Endothelial cell of umbilical vein (primary cell): ENCODE measurements at regions of chr20 and their contacts with region 1.

Region 1: GRCh38 chr20:57596998-57597939 is 23.0 kb downstream of the ZBP1 start:
- DNase-seq: peak; percentile 17
- H3K4me3 ChIP-seq: no peak overlapping the region
- H3K27ac ChIP-seq: no peak overlapping the region
- H3K4me1 ChIP-seq: no peaks in the 10 kb centered on the region
- H3K27me3 ChIP-seq: peaks cover 2% of the 10 kb centered on the region in 2 experiments
- CTCF ChIP-seq: peak; percentile 88 to 94
- POLR2A ChIP-seq: no peak

Region 2: DNA sequence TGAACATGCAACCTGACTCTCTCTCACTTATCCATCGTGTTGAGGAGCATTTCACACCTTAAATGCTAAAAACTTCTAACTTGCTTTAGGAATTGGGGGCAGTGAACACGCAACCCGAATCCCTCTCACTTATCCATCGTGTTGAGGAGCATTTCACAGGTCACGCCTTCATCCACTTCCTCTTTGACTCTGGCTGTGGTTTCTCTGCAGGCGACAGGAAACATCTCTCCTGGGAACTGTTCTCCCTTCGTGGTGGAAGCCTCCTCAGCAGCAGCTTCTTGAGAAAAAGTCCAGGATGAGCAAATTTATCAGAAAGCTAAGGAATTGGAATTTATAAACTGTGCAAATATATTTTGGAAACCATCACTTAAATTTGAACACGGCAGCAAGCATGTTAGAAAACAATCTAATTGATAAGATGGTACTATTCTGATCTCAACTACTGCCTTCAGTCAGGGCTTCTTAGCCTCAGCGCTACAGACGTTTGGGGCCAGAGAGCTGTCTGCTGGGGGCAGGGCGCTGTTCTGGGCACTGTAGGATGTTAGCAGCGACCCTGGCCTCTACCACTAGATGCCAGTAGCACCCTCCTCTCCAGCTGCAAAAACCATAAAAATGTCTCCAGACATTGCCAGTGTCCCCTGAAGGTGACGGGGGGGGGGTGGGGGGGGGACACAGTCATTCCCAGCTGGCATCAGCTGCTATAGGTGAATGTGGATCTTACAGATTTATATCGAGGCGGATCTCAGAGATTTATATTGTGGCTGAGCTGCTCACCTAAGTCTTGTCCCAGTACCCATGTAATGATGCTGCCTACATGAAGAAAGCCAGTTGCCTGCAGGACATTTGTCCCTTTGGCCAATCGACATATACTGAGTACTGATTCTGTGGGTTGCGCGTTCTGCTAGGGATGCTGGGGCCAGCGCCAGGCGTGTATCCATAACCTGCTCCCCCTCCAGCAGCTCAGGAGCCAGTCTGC is 98.6 kb before region 1 on chr20:
- CTCF ChIA-PET with region 1: interaction called, 11 read pairs
- POLR2A ChIA-PET with region 1: no interaction called
- dilution Hi-C with region 1: no loop called
- intact Hi-C with region 1: no loop called
- DNase-seq: no peak
- H3K4me3 ChIP-seq: no peak overlapping the region
- H3K27ac ChIP-seq: no peak overlapping the region
- H3K4me1 ChIP-seq: peaks cover 2% of the 10 kb centered on the region
- H3K27me3 ChIP-seq: peaks cover 13 to 18% of the 10 kb centered on the region in 2 experiments
- CTCF ChIP-seq: peak; percentile 6 to 50
- POLR2A ChIP-seq: no peak

Region 3: GRCh38 chr20:57628047-57628961 is 31.0 kb after region 1 on chr20:
- CTCF ChIA-PET with region 1: interaction called, 4 read pairs
- POLR2A ChIA-PET with region 1: no interaction called
- dilution Hi-C with region 1: no loop called
- intact Hi-C with region 1: loop called (anchors 2 kb)
- DNase-seq: peak; percentile 86
- H3K4me3 ChIP-seq: no peak overlapping the region
- H3K27ac ChIP-seq: peak overlapping the region; percentile 61
- H3K4me1 ChIP-seq: peaks cover 8% of the 10 kb centered on the region
- H3K27me3 ChIP-seq: peaks cover 6% of the 10 kb centered on the region in 2 experiments
- CTCF ChIP-seq: no peak
- POLR2A ChIP-seq: no peak

Region 4: DNA sequence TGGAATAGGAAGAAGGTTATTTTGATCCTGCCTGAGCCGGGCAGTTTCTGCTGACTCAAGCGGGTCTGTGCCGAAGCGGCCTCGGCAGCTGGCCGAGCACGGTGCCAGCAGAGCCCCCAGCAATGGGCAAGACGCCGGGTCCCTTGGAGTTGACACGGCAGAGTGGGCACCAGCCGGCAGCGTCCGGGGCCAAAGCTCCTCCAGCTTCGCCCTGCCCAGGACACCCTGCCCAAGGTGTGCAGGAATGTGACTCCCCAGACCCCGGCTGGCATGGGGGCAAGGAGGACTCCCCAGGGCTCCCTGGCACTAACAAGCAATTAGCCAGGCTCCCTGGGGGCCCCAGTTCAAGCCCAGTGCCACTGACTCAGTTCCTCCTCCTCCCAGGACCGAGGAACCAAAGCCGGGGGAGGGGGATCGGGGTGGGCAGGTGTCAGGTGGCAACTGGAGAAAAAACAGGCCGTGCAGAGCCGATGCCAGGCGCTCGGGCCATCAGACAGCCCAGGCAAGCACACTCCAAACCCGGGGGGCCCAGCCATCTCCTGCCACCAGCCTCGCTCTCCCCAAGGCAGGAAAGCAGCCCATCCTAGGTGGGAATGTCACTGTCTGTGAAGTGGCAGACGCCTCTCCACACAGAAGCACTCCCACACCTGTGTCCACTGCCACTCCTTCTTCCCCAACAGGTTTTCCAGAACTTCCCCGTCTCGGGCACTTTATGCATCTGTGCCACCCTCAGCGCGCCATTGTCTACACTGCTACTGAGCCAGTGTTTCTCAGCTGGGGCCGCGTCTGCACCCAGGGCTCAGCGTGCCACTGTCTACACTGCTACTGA is 64.1 kb after region 1 on chr20:
- CTCF ChIA-PET with region 1: no interaction called
- POLR2A ChIA-PET with region 1: no interaction called
- dilution Hi-C with region 1: no loop called
- intact Hi-C with region 1: no loop called
- DNase-seq: no peak
- H3K4me3 ChIP-seq: no peak overlapping the region
- H3K27ac ChIP-seq: no peak overlapping the region
- H3K4me1 ChIP-seq: no peaks in the 10 kb centered on the region
- H3K27me3 ChIP-seq: no peaks in the 10 kb centered on the region
- CTCF ChIP-seq: no peak
- POLR2A ChIP-seq: no peak

Region 5: GRCh38 chr20:58192567-58192966 is 595.3 kb after region 1 on chr20:
- CTCF ChIA-PET with region 1: interaction called, 4 read pairs
- POLR2A ChIA-PET with region 1: no interaction called
- dilution Hi-C with region 1: no loop called
- intact Hi-C with region 1: loop called (anchors 5 kb)
- DNase-seq: peak; percentile 9
- H3K4me3 ChIP-seq: no peak overlapping the region
- H3K27ac ChIP-seq: no peak overlapping the region
- H3K4me1 ChIP-seq: no peaks in the 10 kb centered on the region
- H3K27me3 ChIP-seq: peaks cover 0 to 1% of the 10 kb centered on the region in 2 experiments
- CTCF ChIP-seq: peak; percentile 69 to 75
- POLR2A ChIP-seq: no peak